ENCODE measurements at regions of chr4 and their contacts with region 1.

Region 1: GRCh38 chr4:106315968-106316772 is at the starts of genes AIMP1 and TBCK:
- DNase-seq: peak; percentile 97
- ATAC-seq: peak; percentile 90
- H3K4me3 ChIP-seq: peak within 1 kb of the TSS; percentile 77 to 98 (median 82)
- H3K4me3 Mint-ChIP-seq: no peak within 1 kb of the TSS
- H3K27ac ChIP-seq: peak within 1 kb of the TSS; percentile 95 to 98
- H3K27ac Mint-ChIP-seq: peak within 1 kb of the TSS; percentile 82
- H3K4me1 ChIP-seq: peaks cover 19 to 26% of the 10 kb centered on the region in 2 donors
- H3K4me1 Mint-ChIP-seq: peaks cover 24% of the 10 kb centered on the region
- H3K27me3 ChIP-seq: no peaks in the 10 kb centered on the region
- H3K27me3 Mint-ChIP-seq: no peaks in the 10 kb centered on the region
- CTCF ChIP-seq: no peak
- total RNA-seq, gene AIMP1: 42.0 and 49.7 TPM in 2 replicates
- total RNA-seq, gene TBCK: 86.1 and 87.6 TPM in 2 replicates

Region 2: DNA sequence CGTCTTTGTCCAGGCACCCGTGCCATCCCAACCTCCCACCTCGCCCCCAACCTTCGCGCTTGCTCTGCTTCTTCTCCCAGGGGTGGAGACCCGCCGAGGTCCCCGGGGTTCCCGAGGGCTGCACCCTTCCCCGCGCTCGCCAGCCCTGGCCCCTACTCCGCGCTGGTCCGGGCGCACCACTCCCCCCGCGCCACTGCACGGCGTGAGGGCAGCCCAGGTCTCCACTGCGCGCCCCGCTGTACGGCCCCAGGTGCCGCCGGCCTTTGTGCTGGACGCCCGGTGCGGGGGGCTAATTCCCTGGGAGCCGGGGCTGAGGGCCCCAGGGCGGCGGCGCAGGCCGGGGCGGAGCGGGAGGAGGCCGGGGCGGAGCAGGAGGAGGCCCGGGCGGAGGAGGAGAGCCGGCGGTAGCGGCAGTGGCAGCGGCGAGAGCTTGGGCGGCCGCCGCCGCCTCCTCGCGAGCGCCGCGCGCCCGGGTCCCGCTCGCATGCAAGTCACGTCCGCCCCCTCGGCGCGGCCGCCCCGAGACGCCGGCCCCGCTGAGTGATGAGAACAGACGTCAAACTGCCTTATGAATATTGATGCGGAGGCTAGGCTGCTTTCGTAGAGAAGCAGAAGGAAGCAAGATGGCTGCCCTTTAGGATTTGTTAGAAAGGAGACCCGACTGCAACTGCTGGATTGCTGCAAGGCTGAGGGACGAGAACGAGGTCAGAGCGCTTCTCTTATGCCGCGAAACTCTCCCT is 1169.7 kb before region 1 on chr4 and contains the start of gene TET2:
- CTCF ChIA-PET with region 1: no interaction called
- POLR2A ChIA-PET with region 1: no interaction called
- intact Hi-C with region 1: loop called (anchors 5 kb)
- DNase-seq: peak; percentile 90
- ATAC-seq: peak; percentile 86
- H3K4me3 ChIP-seq: peak within 1 kb of the TSS; percentile 81 to 95 (median 92)
- H3K4me3 Mint-ChIP-seq: peak within 1 kb of the TSS; percentile 97
- H3K27ac ChIP-seq: peak within 1 kb of the TSS; percentile 87 to 89
- H3K27ac Mint-ChIP-seq: peak within 1 kb of the TSS; percentile 98
- H3K4me1 ChIP-seq: peaks cover 14 to 17% of the 10 kb centered on the region in 2 donors
- H3K4me1 Mint-ChIP-seq: peaks cover 39% of the 10 kb centered on the region
- H3K27me3 ChIP-seq: no peaks in the 10 kb centered on the region
- H3K27me3 Mint-ChIP-seq: no peaks in the 10 kb centered on the region
- CTCF ChIP-seq: no peak
- total RNA-seq, gene TET2: 51.1 and 56.8 TPM in 2 replicates

Region 3: GRCh38 chr4:105708530-105709391 is 607.4 kb before region 1 on chr4 and contains the starts of genes GSTCD and INTS12:
- CTCF ChIA-PET with region 1: no interaction called
- POLR2A ChIA-PET with region 1: no interaction called
- intact Hi-C with region 1: loop called (anchors 1 kb)
- DNase-seq: peak; percentile 94
- ATAC-seq: peak; percentile 94
- H3K4me3 ChIP-seq: peak within 1 kb of the TSS; percentile 80 to 99 (median 90)
- H3K4me3 Mint-ChIP-seq: peak within 1 kb of the TSS; percentile 100
- H3K27ac ChIP-seq: peak within 1 kb of the TSS; percentile 81 to 92
- H3K27ac Mint-ChIP-seq: peak within 1 kb of the TSS; percentile 98
- H3K4me1 ChIP-seq: peaks cover 14 to 19% of the 10 kb centered on the region in 2 donors
- H3K4me1 Mint-ChIP-seq: peaks cover 38% of the 10 kb centered on the region
- H3K27me3 ChIP-seq: no peaks in the 10 kb centered on the region
- H3K27me3 Mint-ChIP-seq: no peaks in the 10 kb centered on the region
- CTCF ChIP-seq: no peak
- total RNA-seq, gene GSTCD: 12.8 and 13.2 TPM in 2 replicates
- total RNA-seq, gene INTS12: 18.4 and 19.1 TPM in 2 replicates

Region 4: GRCh38 chr4:106329041-106329618 is 13.0 kb after region 1 on chr4:
- CTCF ChIA-PET with region 1: interaction called, 13 read pairs
- POLR2A ChIA-PET with region 1: no interaction called
- intact Hi-C with region 1: no loop called
- DNase-seq: peak; percentile 29
- ATAC-seq: peak; percentile 28
- H3K4me3 ChIP-seq: no peak overlapping the region
- H3K4me3 Mint-ChIP-seq: no peak overlapping the region
- H3K27ac ChIP-seq: no peak overlapping the region
- H3K27ac Mint-ChIP-seq: no peak overlapping the region
- H3K4me1 ChIP-seq: no peaks in the 10 kb centered on the region
- H3K4me1 Mint-ChIP-seq: no peaks in the 10 kb centered on the region
- H3K27me3 ChIP-seq: no peaks in the 10 kb centered on the region
- H3K27me3 Mint-ChIP-seq: no peaks in the 10 kb centered on the region
- CTCF ChIP-seq: peak; percentile 69

Region 5: GRCh38 chr4:107719922-107720722 is 1404.0 kb after region 1 on chr4 and contains the start of gene PAPSS1:
- CTCF ChIA-PET with region 1: no interaction called
- POLR2A ChIA-PET with region 1: no interaction called
- intact Hi-C with region 1: loop called (anchors 1 kb)
- DNase-seq: peak; percentile 99
- ATAC-seq: peak; percentile 85
- H3K4me3 ChIP-seq: peak within 1 kb of the TSS; percentile 68 to 93 (median 90)
- H3K4me3 Mint-ChIP-seq: peak within 1 kb of the TSS; percentile 99
- H3K27ac ChIP-seq: peak within 1 kb of the TSS; percentile 50 to 75
- H3K27ac Mint-ChIP-seq: peak within 1 kb of the TSS; percentile 97
- H3K4me1 ChIP-seq: peaks cover 22 to 26% of the 10 kb centered on the region in 2 donors
- H3K4me1 Mint-ChIP-seq: peaks cover 39% of the 10 kb centered on the region
- H3K27me3 ChIP-seq: no peaks in the 10 kb centered on the region
- H3K27me3 Mint-ChIP-seq: no peaks in the 10 kb centered on the region
- CTCF ChIP-seq: no peak
- total RNA-seq, gene PAPSS1: 31.5 and 33.9 TPM in 2 replicates

Region 6: GRCh38 chr4:107930821-107931774 is 1614.9 kb after region 1 on chr4 and contains the start of gene CYP2U1:
- CTCF ChIA-PET with region 1: no interaction called
- POLR2A ChIA-PET with region 1: no interaction called
- intact Hi-C with region 1: loop called (anchors 5 kb)
- DNase-seq: peak; percentile 87
- ATAC-seq: peak; percentile 95
- H3K4me3 ChIP-seq: peak within 1 kb of the TSS; percentile 27 to 97 (median 80)
- H3K4me3 Mint-ChIP-seq: peak within 1 kb of the TSS; percentile 98
- H3K27ac ChIP-seq: peak within 1 kb of the TSS; percentile 72 to 75
- H3K27ac Mint-ChIP-seq: peak within 1 kb of the TSS; percentile 96
- H3K4me1 ChIP-seq: peaks cover 11 to 21% of the 10 kb centered on the region in 2 donors
- H3K4me1 Mint-ChIP-seq: peaks cover 44% of the 10 kb centered on the region
- H3K27me3 ChIP-seq: no peaks in the 10 kb centered on the region
- H3K27me3 Mint-ChIP-seq: no peaks in the 10 kb centered on the region
- CTCF ChIP-seq: no peak
- total RNA-seq, gene CYP2U1: 16.3 and 17.6 TPM in 2 replicates

Region 7: DNA sequence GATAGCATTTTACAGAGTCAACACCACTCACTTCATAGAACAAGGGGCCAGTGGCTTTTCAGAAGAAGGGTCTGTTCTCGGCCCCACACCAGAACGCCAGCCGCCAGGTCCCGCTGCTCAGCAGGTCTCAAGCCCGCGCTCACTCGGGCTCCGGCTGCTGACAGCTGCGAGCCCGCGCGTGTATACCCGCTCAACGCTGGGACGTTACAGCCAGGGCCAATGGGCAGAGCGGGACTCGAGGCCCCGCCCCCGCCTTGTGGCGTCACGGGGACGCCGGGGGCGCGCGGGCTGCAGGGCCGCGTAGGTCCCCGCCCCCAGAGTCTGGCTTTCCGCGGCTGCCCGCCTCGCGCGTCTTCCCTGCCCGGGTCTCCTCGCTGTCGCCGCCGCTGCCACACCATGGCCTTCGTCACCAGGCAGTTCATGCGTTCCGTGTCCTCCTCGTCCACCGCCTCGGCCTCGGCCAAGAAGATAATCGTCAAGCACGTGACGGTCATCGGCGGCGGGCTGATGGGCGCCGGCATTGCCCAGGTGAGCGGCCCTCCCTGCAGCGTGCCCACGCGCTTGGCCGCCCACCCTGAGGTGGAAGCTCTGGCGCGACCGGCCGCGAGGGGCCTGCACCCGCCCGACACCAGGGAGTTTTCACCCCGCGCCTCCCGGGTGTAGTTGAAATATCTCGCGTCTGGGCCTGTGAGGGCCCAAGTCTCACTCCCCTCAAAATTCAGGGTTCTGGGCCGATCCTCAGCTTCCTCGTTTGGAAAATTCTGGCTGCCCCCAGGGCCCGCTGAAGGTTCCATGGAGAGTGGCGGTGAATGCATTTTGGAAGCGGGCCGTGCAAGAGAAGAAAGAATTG is 1673.6 kb after region 1 on chr4 and contains the start of gene HADH:
- CTCF ChIA-PET with region 1: no interaction called
- POLR2A ChIA-PET with region 1: no interaction called
- intact Hi-C with region 1: loop called (anchors 10 kb)
- DNase-seq: peak; percentile 95
- ATAC-seq: peak; percentile 98
- H3K4me3 ChIP-seq: peak within 1 kb of the TSS; percentile 65 to 87 (median 71)
- H3K4me3 Mint-ChIP-seq: peak within 1 kb of the TSS; percentile 81
- H3K27ac ChIP-seq: peak within 1 kb of the TSS; percentile 38 to 82
- H3K27ac Mint-ChIP-seq: peak within 1 kb of the TSS; percentile 82
- H3K4me1 ChIP-seq: peaks cover 33 to 46% of the 10 kb centered on the region in 2 donors
- H3K4me1 Mint-ChIP-seq: peaks cover 48% of the 10 kb centered on the region
- H3K27me3 ChIP-seq: no peaks in the 10 kb centered on the region
- H3K27me3 Mint-ChIP-seq: no peaks in the 10 kb centered on the region
- CTCF ChIP-seq: no peak
- total RNA-seq, gene HADH: 26.1 and 26.4 TPM in 2 replicates